HEK293T (cell line): ENCODE measurements at regions of chr16 and their contacts with region 1.

Region 1: GRCh38 chr16:82263521-82264143 is 93.6 kb upstream of the MPHOSPH6 start:
- DNase-seq: peak; percentile 67

Region 2: GRCh38 chr16:82344157-82344556 is 80.5 kb after region 1 on chr16:
- CTCF ChIA-PET with region 1: interaction called, 14 read pairs
- POLR2A ChIA-PET with region 1: interaction called, 3 read pairs
- DNase-seq: peak; percentile 18

Region 3: DNA sequence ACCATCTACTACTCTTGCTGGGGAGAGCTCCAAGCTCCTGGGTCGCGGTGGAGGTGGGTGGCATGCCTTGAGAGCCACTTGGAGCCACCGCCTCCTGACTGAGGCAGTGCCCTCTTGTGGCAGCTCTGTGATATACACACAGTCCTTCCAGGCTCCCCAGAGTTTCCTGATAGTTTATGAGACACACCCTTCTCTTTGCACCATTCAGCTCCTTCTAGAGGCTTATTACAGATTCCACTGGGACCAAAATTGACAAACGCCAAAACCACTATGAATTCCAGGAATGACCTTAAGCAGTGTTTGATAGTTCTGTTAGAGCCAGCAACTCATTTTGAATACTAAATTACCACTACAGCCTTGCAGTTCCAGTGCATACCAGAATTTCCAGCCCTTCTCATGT is 193.1 kb after region 1 on chr16:
- CTCF ChIA-PET with region 1: interaction called, 23 read pairs
- POLR2A ChIA-PET with region 1: no interaction called
- DNase-seq: peak; percentile 71